Activated CD4-positive, alpha-beta T cell treated with anti-CD3 and anti-CD28 coated beads, Interleukin-2, amount 10 ng/mL, durations not matched to agents 7 days and 5 days (primary cell): ENCODE measurements at regions of chr5 and their contacts with region 1.

Region 1: GRCh38 chr5:92041911-92042660 is 659.0 kb upstream of the ARRDC3 start:
- DNase-seq: no peak
- H3K4me3 Mint-ChIP-seq: no peak overlapping the region
- H3K27ac Mint-ChIP-seq: no peak overlapping the region
- H3K4me1 Mint-ChIP-seq: no peaks in the 10 kb centered on the region
- H3K27me3 Mint-ChIP-seq: no peaks in the 10 kb centered on the region

Region 2: GRCh38 chr5:91794856-91795548 is 247.1 kb before region 1 on chr5:
- CTCF ChIA-PET with region 1: no interaction called
- POLR2A ChIA-PET with region 1: interaction called, 12 read pairs
- DNase-seq: no peak
- H3K4me3 Mint-ChIP-seq: no peak overlapping the region
- H3K27ac Mint-ChIP-seq: no peak overlapping the region
- H3K4me1 Mint-ChIP-seq: no peaks in the 10 kb centered on the region
- H3K27me3 Mint-ChIP-seq: no peaks in the 10 kb centered on the region

Region 3: GRCh38 chr5:92023555-92023954 is 18.5 kb before region 1 on chr5:
- CTCF ChIA-PET with region 1: no interaction called
- POLR2A ChIA-PET with region 1: no interaction called
- DNase-seq: no peak
- H3K4me3 Mint-ChIP-seq: no peak overlapping the region
- H3K27ac Mint-ChIP-seq: no peak overlapping the region
- H3K4me1 Mint-ChIP-seq: no peaks in the 10 kb centered on the region
- H3K27me3 Mint-ChIP-seq: no peaks in the 10 kb centered on the region